Left cardiac atrium (tissue), 4 donors: ENCODE measurements at regions of chr5 and their contacts with region 1.

Region 1: GRCh38 chr5:123671042-123671441 is 159.1 kb downstream of the CSNK1G3 start:
- DNase-seq: peak; percentile 29
- ATAC-seq: peak in 1 of 2 donors; percentile 19

Region 2: GRCh38 chr5:124176691-124177090 is 505.6 kb after region 1 on chr5:
- intact Hi-C with region 1: loop called in 1 of 2 experiments (anchors 5 kb)
- DNase-seq: peak; percentile 35
- ATAC-seq: peak; percentile 83 to 99